ENCODE measurements at regions of chr4 and their contacts with region 1.

Region 1: GRCh38 chr4:107736924-107737448 is 17.0 kb upstream of the PAPSS1 start:
- H3K4me3 ChIP-seq: no peak overlapping the region
- H3K27ac ChIP-seq: no peak overlapping the region
- H3K4me1 ChIP-seq: 0 out of 2 replicates have a peak, but pooled peaks cover 3% of the 10 kb centered on the region
- CTCF ChIP-seq: no peak

Region 2: GRCh38 chr4:107619731-107620130 is 117.3 kb before region 1 on chr4:
- CTCF ChIA-PET with region 1: no interaction called
- POLR2A ChIA-PET with region 1: no interaction called
- H3K4me3 ChIP-seq: no peak overlapping the region
- H3K27ac ChIP-seq: no peak overlapping the region
- H3K4me1 ChIP-seq: no peaks in the 10 kb centered on the region
- CTCF ChIP-seq: no peak

Region 3: DNA sequence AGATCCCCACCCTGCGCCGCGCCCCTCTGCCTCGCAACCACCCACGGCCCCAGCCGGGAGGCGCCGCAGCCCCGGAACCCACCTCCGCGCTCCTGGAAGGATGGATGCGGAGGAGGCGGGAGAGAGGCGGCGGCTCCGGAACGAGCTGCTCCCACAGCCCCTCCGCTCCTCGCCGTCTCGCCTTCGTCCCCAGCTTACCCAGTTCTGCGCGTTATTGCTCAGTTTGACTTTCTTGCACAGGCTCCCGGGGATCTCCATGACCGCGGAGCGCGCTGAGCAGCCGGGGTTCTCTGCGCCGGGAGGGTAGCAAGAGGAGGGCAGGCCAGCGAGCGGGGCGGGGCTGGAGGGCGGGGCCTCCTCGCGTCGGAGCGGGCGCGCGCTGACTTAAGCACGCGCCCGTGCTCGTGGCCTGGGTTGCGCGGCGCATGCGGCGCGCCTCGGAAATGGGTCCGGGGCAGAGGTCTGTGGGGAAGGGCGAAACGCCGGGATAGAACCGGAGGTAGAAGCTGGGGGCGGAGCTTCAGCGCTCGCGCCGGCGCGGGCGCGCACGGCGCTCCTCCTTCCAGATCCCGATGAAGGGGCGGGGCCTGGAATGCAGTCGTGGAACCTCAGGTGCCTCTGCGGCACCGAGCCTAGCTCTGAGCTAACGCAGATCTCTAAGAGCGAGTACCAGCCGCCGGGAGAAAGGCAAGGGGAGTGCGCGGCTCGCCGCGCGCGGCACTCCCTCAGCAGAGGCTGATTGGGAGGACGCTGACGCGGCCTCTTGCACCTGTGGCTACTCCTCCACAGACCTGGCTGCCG is 16.9 kb before region 1 on chr4 and contains the start of gene PAPSS1:
- CTCF ChIA-PET with region 1: interaction called, 20 read pairs
- POLR2A ChIA-PET with region 1: interaction called, 7 read pairs
- H3K4me3 ChIP-seq: peak within 1 kb of the TSS; percentile 91
- H3K27ac ChIP-seq: peak within 1 kb of the TSS; percentile 71
- H3K4me1 ChIP-seq: peaks cover 6% of the 10 kb centered on the region
- CTCF ChIP-seq: peak; percentile 25; the same call in 1 of the 2 replicates

Region 4: GRCh38 chr4:107747748-107748486 is 10.9 kb after region 1 on chr4:
- CTCF ChIA-PET with region 1: interaction called, 10 read pairs
- POLR2A ChIA-PET with region 1: no interaction called
- H3K4me3 ChIP-seq: no peak overlapping the region
- H3K27ac ChIP-seq: no peak overlapping the region
- H3K4me1 ChIP-seq: no peaks in the 10 kb centered on the region
- CTCF ChIP-seq: no peak

Region 5: GRCh38 chr4:107896158-107897045 is 159.4 kb after region 1 on chr4:
- CTCF ChIA-PET with region 1: no interaction called
- POLR2A ChIA-PET with region 1: no interaction called
- H3K4me3 ChIP-seq: no peak overlapping the region
- H3K27ac ChIP-seq: no peak overlapping the region
- H3K4me1 ChIP-seq: no peaks in the 10 kb centered on the region
- CTCF ChIP-seq: no peak

Region 6: GRCh38 chr4:107922486-107923483 is 185.8 kb after region 1 on chr4:
- CTCF ChIA-PET with region 1: no interaction called
- POLR2A ChIA-PET with region 1: no interaction called
- H3K4me3 ChIP-seq: no peak overlapping the region
- H3K27ac ChIP-seq: no peak overlapping the region
- H3K4me1 ChIP-seq: no peaks in the 10 kb centered on the region
- CTCF ChIP-seq: no peak

Region 7: GRCh38 chr4:107951551-107951950 is 214.6 kb after region 1 on chr4:
- CTCF ChIA-PET with region 1: no interaction called
- POLR2A ChIA-PET with region 1: no interaction called
- H3K4me3 ChIP-seq: no peak overlapping the region
- H3K27ac ChIP-seq: no peak overlapping the region
- H3K4me1 ChIP-seq: no peaks in the 10 kb centered on the region
- CTCF ChIP-seq: no peak

Measured in HEK293 (cell line).